ENCODE measurements at regions of chr3 and their contacts with region 1.

Region 1: GRCh38 chr3:188954590-188955208 is 217.1 kb upstream of the TPRG1 start:
- DNase-seq: peak; percentile 82 to 90
- H3K4me3 ChIP-seq: no peak overlapping the region
- H3K27ac ChIP-seq: peak overlapping the region in 1 of 2 donors; percentile 17
- H3K4me1 ChIP-seq: peaks cover 4 to 41% (median 23%) of the 10 kb centered on the region in 4 donors
- H3K27me3 ChIP-seq: no peaks in the 10 kb centered on the region
- CTCF ChIP-seq: peak; percentile 88 to 94

Region 2: GRCh38 chr3:188052169-188053030 is 902.3 kb before region 1 on chr3:
- intact Hi-C with region 1: loop called (anchors 5 kb)
- DNase-seq: peak; percentile 93 to 98
- H3K4me3 ChIP-seq: peak overlapping the region; percentile 39 to 43
- H3K27ac ChIP-seq: peak overlapping the region; percentile 91 to 94
- H3K4me1 ChIP-seq: peaks cover 11 to 52% (median 41%) of the 10 kb centered on the region in 4 donors
- H3K27me3 ChIP-seq: no peaks in the 10 kb centered on the region
- CTCF ChIP-seq: peak; percentile 62 to 67

Region 3: DNA sequence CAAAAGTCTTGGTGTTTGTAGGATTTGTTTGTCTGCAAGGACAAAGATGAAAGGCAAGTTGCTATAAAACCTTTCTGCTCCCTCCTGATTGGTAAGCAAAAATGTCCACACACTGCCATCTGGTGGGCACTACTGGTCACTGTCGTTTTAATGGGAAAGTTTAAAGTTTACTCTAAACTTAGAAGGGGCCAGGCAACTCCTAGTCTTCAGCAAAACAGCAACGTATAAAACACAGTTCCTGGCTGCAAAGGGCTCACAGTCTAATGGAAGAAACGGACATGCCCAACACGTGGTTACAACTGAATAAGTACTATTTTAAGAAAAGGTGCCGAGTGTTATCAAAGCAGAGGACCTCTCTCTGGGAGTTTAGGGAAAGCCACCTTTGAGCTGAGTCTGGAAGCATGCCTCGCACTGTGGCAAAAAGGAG is 193.4 kb after region 1 on chr3:
- intact Hi-C with region 1: loop called (anchors 5 kb)
- DNase-seq: peak; percentile 70 to 75
- H3K4me3 ChIP-seq: no peak overlapping the region
- H3K27ac ChIP-seq: peak overlapping the region in 1 of 2 donors; percentile 30
- H3K4me1 ChIP-seq: peaks cover 0 to 7% (median 2%) of the 10 kb centered on the region in 4 donors
- H3K27me3 ChIP-seq: no peaks in the 10 kb centered on the region
- CTCF ChIP-seq: peak; percentile 72 to 88

Region 4: DNA sequence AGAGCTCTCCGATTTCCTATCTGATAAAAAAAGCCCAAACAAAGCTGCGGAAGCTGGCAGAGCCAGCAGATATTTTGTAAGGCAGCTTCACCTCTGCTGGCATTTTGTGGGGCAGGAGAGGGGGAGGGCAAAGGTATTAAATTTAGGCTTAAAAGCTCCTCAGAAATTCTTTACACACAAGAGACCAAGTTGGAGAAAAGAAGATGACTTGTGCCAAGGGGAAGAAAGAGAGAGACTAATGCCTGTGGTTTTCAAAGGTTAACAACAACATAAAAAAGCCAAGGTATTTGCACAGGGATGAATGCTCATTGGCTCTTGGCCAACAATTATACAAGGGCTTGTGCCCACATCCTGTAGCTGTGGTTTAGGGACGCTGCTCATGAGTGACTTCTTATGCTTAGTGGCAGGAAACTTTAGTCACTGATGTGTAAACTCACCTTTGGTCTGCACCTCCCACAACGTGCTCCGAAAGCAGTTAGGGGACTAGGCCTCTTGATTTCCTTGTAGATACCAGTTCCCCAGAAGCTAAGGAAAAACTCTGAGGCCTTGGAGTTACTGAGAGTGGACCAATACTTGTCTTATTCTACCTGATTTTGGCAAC is 369.9 kb after region 1 on chr3:
- intact Hi-C with region 1: no loop called
- DNase-seq: peak in 1 of 2 donors; percentile 19
- H3K4me3 ChIP-seq: no peak overlapping the region
- H3K27ac ChIP-seq: peak overlapping the region in 1 of 2 donors; percentile 20
- H3K4me1 ChIP-seq: peaks cover 0 to 30% (median 11%) of the 10 kb centered on the region in 4 donors
- H3K27me3 ChIP-seq: no peaks in the 10 kb centered on the region
- CTCF ChIP-seq: no peak